Prostate gland (tissue), 2 donors: ENCODE measurements at regions of chr13 and their contacts with region 1.

Region 1: DNA sequence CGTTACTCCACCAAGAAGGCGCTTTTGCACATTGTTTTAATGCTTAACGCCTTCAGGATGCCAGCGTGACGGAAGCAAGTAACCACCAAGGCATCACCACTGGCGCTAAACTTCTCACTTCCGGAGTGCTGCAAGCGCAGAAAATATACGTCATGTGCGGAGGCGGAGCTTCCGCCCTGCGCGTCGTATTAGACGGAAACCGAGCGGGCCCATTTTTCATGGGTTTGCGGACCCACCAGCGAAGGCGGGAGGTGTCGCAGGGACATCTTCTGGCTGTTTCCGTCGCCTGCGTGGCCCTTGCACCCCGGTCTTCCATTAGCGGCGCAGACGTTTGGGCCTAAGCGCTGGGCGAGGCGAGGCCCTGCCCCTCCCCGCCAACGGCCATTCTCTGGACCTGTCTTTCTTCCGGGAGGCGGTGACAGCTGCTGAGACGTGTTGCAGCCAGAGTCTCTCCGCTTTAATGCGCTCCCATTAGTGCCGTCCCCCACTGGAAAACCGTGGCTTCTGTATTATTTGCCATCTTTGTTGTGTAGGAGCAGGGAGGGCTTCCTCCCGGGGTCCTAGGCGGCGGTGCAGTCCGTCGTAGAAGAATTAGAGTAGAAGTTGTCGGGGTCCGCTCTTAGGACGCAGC is at the start of gene ERCC5:
- DNase-seq: peak; percentile 89
- H3K4me3 ChIP-seq: peak within 1 kb of the TSS; percentile 72 to 74
- H3K27ac ChIP-seq: peak within 1 kb of the TSS; percentile 88 to 95
- H3K4me1 ChIP-seq: peaks cover 2% of the 10 kb centered on the region
- H3K27me3 ChIP-seq: no peaks in the 10 kb centered on the region
- CTCF ChIP-seq: peak in 2 of 4 experiments; percentile 14 to 25
- POLR2A ChIP-seq: peak; percentile 68
- total RNA-seq, gene ERCC5: 60.9 to 72.7 TPM

Region 2: GRCh38 chr13:102580552-102581169 is 265.1 kb before region 1 on chr13:
- intact Hi-C with region 1: loop called (anchors 5 kb)
- DNase-seq: peak; percentile 49
- H3K4me3 ChIP-seq: no peak overlapping the region
- H3K27ac ChIP-seq: no peak overlapping the region
- H3K4me1 ChIP-seq: no peaks in the 10 kb centered on the region
- H3K27me3 ChIP-seq: no peaks in the 10 kb centered on the region
- CTCF ChIP-seq: peak; percentile 39 to 71 (median 66)
- POLR2A ChIP-seq: no peak

Region 3: DNA sequence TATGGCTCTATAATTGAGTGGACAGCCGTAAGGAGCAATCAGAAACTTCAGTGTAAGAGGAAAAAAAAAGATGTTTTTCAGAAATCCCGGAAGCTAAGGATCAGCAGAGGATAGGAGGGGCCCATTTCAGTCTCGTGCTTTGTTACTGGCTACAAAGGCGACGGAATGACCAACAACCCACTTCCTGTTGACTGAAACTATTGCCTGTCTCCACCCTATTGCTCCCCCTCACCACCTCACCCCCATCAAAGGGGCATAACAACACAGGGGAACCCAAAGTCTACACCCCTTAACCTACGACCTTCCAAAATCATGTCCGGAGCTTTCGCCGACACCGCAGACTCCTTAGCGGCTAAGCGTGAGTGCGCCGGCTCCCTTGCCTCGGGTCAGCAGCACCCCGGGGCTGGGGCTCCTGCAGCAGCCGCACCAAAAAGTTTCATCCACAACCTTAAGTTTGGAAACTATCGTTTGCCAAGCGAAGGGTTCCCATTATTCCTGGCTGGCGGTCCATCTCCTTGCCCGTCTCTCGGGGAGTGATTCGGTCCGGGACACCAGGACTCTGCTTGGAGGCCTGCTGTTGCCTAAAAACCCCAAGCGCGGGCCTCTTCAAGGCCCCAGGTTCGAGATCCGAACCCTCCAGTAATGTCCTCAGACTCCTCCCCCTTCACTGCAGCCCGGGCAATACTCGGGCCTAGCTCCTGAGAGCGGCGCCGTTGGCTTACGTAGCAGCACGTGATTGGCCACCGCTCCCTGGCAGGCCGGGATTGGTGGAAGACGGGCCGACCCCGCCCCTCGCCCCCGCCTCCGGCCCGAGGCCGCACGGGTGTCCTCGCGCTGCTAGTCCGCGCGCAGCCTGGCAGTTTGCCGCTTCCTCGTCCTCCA is 249.4 kb before region 1 on chr13 and contains the start of gene TPP2:
- intact Hi-C with region 1: loop called (anchors 1 kb)
- DNase-seq: peak; percentile 98
- H3K4me3 ChIP-seq: peak within 1 kb of the TSS; percentile 97 to 99
- H3K27ac ChIP-seq: peak within 1 kb of the TSS; percentile 95 to 96
- H3K4me1 ChIP-seq: no peaks in the 10 kb centered on the region
- H3K27me3 ChIP-seq: no peaks in the 10 kb centered on the region
- CTCF ChIP-seq: peak in 2 of 4 experiments; percentile 3 to 8
- POLR2A ChIP-seq: peak; percentile 85
- total RNA-seq, gene TPP2: 31.4 to 31.8 TPM

Region 4: GRCh38 chr13:102773441-102774215 is 72.1 kb before region 1 on chr13 and contains the start of gene TEX30:
- intact Hi-C with region 1: loop called (anchors 2 kb)
- DNase-seq: peak; percentile 66
- H3K4me3 ChIP-seq: peak within 1 kb of the TSS; percentile 63 to 73
- H3K27ac ChIP-seq: peak within 1 kb of the TSS; percentile 70 to 74
- H3K4me1 ChIP-seq: no peaks in the 10 kb centered on the region
- H3K27me3 ChIP-seq: no peaks in the 10 kb centered on the region
- CTCF ChIP-seq: no peak
- POLR2A ChIP-seq: peak; percentile 63
- total RNA-seq, gene TEX30: 3.6 to 22.2 TPM

Region 5: GRCh38 chr13:102800145-102801041 is 45.4 kb before region 1 on chr13:
- intact Hi-C with region 1: loop called (anchors 5 kb)
- DNase-seq: peak; percentile 63
- H3K4me3 ChIP-seq: peak overlapping the region; percentile 47 to 56
- H3K27ac ChIP-seq: peak overlapping the region; percentile 77 to 83
- H3K4me1 ChIP-seq: no peaks in the 10 kb centered on the region
- H3K27me3 ChIP-seq: no peaks in the 10 kb centered on the region
- CTCF ChIP-seq: peak; percentile 37 to 70 (median 58)
- POLR2A ChIP-seq: no peak